Heart right ventricle (tissue), 16 donors: ENCODE measurements at regions of chr6 and their contacts with region 1.

Region 1: GRCh38 chr6:40672097-40672496 is 84.9 kb upstream of the LRFN2 start:
- DNase-seq: no peak
- ATAC-seq: no peak
- H3K4me3 ChIP-seq: no peak overlapping the region
- H3K27ac ChIP-seq: no peak overlapping the region
- H3K4me1 ChIP-seq: no peaks in the 10 kb centered on the region
- H3K27me3 ChIP-seq: peaks cover 0 to 9% (median 0%) of the 10 kb centered on the region in 7 donors
- CTCF ChIP-seq: peak in 3 of 9 donors; percentile 11 to 26 (median 20)

Region 2: DNA sequence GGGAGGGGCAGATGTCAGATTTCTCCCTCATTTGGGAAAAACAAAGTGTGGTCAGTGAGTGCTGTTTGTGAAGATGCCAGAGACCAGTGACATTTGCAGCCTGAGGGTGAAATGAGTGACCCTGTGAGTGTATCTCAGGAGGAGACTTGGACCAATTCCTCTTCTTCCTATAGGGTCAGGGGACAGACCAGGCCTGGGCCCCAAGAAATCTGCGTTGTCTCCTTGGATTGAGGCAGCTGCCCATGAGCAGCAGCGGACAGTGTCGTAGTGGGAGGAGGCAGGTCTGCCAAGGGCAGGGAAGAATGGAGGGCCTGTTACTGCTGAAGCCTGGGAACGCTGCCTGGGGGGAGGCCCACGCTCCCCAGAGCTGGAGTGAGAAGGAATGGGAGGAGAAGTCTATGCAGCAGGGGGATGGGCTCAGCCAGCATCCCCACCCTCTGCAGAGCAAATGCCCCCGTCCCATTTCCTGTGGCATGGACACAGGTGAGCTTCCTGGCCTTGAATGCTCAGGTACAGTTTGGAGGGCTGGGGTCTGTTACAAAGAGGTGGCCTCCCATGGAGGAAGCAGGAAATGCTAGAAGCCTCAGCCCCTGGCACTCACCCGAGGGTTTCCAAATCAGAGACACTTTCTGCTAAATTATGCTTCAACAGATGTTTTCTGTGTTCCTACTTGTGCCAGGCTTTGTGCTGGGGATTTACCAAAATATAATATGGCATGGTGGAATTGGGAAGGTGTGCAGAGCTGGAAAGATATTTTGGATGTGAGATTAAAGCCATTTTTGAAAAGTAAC is 850.2 kb before region 1 on chr6:
- intact Hi-C with region 1: no loop called
- DNase-seq: peak; percentile 59 to 61
- ATAC-seq: peak; percentile 56 to 83 (median 68)
- H3K4me3 ChIP-seq: peak overlapping the region in 9 of 10 donors; percentile 7 to 41 (median 33)
- H3K27ac ChIP-seq: peak overlapping the region; percentile 71 to 84 (median 80)
- H3K4me1 ChIP-seq: peaks cover 0 to 73% (median 35%) of the 10 kb centered on the region in 9 donors
- H3K27me3 ChIP-seq: no peaks in the 10 kb centered on the region
- CTCF ChIP-seq: no peak

Region 3: GRCh38 chr6:40701352-40702007 is 29.4 kb after region 1 on chr6:
- intact Hi-C with region 1: loop called in 1 of 10 experiments (anchors 1 kb)
- DNase-seq: no peak
- ATAC-seq: no peak
- H3K4me3 ChIP-seq: no peak overlapping the region
- H3K27ac ChIP-seq: no peak overlapping the region
- H3K4me1 ChIP-seq: no peaks in the 10 kb centered on the region
- H3K27me3 ChIP-seq: peaks cover 0 to 37% (median 9%) of the 10 kb centered on the region in 7 donors
- CTCF ChIP-seq: no peak